OCI-LY7 (cell line): ENCODE measurements at regions of chr4 and their contacts with region 1.

Region 1: GRCh38 chr4:119623025-119623424 is 5.6 kb downstream of the PDE5A start:
- DNase-seq: no peak
- H3K4me3 ChIP-seq: no peak overlapping the region
- H3K27ac ChIP-seq: no peak overlapping the region
- H3K4me1 ChIP-seq: peaks cover 7% of the 10 kb centered on the region
- CTCF ChIP-seq: no peak

Region 2: GRCh38 chr4:119179011-119179410 is 444.0 kb before region 1 on chr4:
- CTCF ChIA-PET with region 1: no interaction called
- POLR2A ChIA-PET with region 1: interaction called, 11 read pairs
- intact Hi-C with region 1: no loop called
- DNase-seq: no peak
- H3K4me3 ChIP-seq: no peak overlapping the region
- H3K27ac ChIP-seq: no peak overlapping the region
- H3K4me1 ChIP-seq: no peaks in the 10 kb centered on the region
- CTCF ChIP-seq: no peak

Region 3: DNA sequence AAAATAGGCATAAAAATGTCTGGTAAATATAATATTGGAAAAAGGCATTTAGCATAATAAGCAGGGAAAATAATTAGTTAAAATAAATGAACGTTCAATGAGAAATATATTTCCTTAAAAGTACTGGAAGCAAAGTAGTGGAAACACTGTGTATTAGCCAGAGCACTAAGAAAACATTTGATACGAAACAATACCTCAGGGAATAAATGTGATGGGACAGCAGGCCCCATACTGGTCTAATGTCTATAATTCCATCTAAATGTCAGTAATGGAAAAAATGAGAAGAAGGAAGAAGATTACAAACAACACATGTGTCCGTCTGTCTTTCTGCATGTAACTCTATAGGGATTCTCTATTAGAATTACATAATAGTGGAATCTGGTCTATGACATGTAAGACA is 73.4 kb before region 1 on chr4:
- CTCF ChIA-PET with region 1: no interaction called
- POLR2A ChIA-PET with region 1: no interaction called
- intact Hi-C with region 1: loop called (anchors 5 kb)
- DNase-seq: no peak
- H3K4me3 ChIP-seq: no peak overlapping the region
- H3K27ac ChIP-seq: no peak overlapping the region
- H3K4me1 ChIP-seq: no peaks in the 10 kb centered on the region
- CTCF ChIP-seq: no peak